ENCODE measurements at regions of chr11 and their contacts with region 1.

Region 1: DNA sequence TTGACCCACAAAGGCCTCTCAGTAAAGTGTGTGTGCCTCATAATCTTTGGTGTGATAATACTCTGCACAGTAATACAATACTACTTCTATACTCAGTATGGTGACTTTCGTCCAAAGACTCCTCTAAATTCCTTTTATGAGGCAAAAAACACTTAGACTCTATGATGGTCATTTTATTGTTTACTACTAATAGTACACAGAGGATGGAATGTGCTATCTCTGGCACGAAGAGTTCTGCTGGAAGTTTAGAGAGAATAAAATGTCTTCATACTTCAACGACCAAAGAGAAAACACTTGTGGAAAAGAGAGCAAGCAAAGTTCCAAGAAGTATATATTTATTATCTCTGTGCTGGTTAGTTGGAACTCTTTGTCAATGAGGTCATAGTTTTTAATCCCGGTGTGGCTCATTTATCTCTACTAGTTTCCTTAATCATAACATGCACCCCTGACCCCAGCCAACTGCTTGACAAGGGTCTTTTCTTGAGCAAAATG is 7.5 kb upstream of the CSTF3 start:
- DNase-seq: no peak
- ATAC-seq: peak; percentile 52

Region 2: DNA sequence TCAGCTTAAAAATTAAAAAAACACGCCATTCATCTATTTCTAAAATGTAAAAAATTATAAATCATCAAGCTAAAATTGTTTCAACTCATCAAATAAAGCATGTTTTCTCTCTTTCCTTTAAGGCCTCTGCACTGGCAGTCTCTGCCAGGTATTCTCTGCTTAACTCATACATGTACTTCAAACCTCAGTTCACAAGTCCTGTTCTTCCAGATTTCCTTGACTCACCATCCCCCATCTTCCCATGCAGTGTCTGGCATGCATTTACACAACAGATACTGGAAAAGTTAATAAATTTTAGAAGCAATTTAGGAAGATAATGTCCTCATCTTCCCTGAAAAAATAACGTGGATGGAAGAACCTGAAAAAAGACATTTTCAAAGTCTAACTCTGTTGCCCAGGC is 40.0 kb before region 1 on chr11:
- intact Hi-C with region 1: no loop called
- DNase-seq: no peak
- ATAC-seq: no peak

Region 3: GRCh38 chr11:33227578-33228262 is 59.0 kb after region 1 on chr11:
- intact Hi-C with region 1: loop called (anchors 2 kb)
- DNase-seq: no peak
- ATAC-seq: peak; percentile 67

Region 4: DNA sequence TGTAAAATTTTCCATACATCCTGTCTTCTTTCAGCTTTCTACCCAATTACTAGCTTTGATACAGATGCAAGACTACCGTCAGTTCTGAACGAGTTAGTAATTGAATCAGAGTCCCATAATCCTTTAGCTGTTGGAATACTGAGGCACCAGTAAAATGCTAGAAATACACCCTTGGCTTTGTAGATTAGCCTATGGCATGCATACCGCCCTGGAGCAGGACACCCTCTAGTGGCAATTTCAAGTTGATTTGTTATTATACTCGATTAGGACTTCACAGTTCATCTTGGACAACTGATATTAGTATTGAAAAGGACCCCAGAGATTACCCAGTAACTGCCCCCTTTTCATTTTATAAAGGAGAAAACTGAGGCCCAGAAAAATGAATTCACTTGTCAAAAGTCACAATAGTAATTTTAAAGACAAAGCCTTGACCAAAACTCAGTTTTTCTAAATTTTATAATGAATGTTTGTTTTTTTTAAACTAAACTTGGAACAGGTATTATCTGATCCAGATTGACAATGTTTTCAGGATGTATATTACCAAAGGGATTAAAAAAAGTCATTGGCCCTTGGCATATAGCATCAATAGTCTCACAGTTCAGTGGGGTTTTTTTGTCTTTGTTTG is 161.1 kb after region 1 on chr11:
- intact Hi-C with region 1: loop called (anchors 5 kb)
- DNase-seq: no peak
- ATAC-seq: peak; percentile 72

Measured in left ventricle myocardium superior (tissue), 1 donor.